BJ (cell line): ENCODE measurements at regions of chr20 and their contacts with region 1.

Region 1: DNA sequence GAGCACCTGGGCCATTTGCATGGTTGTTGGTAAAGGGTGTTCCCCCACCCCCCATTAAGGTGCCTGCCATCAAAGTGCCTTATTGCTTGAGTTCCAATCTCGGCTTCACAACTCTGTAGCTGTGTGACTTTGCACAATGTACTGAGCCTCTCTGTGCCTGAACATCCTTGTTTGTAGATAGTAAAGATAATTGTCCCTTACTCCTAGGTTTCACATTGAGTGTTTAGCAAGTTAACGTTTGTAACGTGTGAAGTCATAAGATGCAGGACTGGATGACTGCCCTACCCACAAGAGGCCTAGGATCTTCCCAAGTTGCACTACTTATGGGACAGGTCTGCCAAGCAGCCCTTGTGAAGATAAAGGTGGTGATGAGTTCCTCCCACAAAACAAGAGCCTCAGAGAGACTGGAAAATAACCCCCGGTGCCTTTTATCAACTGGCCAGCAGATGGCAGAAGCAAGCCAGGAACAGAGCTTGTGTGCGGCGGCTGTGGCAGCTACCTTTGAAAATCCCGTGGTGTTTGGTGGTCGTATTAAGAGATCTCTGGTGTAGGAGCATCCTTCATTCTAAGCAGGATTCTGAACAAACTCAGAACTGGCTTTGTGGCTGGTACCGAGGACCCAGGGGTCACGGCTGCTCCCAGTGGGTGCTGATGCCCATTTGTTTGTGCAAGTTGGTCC is 99.0 kb downstream of the CDH26 start:
- DNase-seq: no peak
- H3K4me3 ChIP-seq: no peak overlapping the region
- H3K27me3 ChIP-seq: no peaks in the 10 kb centered on the region
- CTCF ChIP-seq: peak; percentile 89

Region 2: DNA sequence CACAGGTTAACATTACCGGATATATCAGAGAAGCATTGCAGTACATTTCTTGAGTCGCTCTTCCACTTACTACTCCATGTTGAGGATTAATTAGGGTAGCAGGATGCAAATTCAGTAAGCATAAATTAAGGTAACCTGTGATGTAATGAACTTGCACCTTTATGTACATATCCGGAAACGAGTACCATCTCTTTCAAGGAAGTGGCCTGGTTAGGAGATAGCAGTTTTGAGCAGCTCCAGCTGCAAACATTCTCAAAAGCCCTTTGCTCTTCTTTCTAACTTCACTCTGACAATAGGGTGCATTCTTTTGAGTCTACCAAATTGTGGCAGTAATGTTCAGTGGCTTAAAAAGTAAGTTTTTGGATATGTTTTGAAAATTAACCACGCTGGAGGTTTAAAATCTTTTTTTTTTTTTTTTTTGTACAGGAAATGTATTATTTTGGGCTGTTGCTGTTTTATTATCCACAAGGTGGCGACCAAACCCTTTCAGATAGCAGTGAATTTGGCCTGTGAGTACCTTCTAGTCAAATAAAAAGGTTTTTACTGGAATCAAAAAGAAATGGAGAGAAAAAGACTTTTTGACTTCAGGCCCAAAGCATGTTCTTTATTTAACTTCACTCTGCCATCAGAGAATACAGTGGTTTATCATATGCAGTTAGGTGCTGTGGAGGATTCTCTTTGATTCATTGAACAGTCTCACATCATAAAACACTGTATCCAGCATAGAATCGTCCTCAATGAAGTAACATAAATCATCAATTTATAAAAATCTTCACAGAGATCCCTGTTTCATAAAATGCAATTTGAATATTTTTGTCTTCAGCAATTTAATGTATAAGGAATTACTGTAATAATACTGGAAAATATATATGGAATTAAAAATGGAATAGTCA is 108.2 kb before region 1 on chr20:
- CTCF ChIA-PET with region 1: interaction called, 12 read pairs
- POLR2A ChIA-PET with region 1: no interaction called
- DNase-seq: no peak
- H3K4me3 ChIP-seq: no peak overlapping the region
- H3K27me3 ChIP-seq: no peaks in the 10 kb centered on the region
- CTCF ChIP-seq: peak; percentile 67

Region 3: GRCh38 chr20:60113024-60113724 is 55.9 kb after region 1 on chr20:
- CTCF ChIA-PET with region 1: interaction called, 15 read pairs
- POLR2A ChIA-PET with region 1: interaction called, 3 read pairs
- DNase-seq: no peak
- H3K4me3 ChIP-seq: no peak overlapping the region
- H3K27me3 ChIP-seq: no peaks in the 10 kb centered on the region
- CTCF ChIP-seq: no peak

Region 4: GRCh38 chr20:60210779-60211617 is 153.7 kb after region 1 on chr20:
- CTCF ChIA-PET with region 1: interaction called, 65 read pairs
- POLR2A ChIA-PET with region 1: no interaction called
- DNase-seq: no peak
- H3K4me3 ChIP-seq: no peak overlapping the region
- H3K27me3 ChIP-seq: peaks cover 8% of the 10 kb centered on the region
- CTCF ChIP-seq: peak; percentile 94

Region 5: DNA sequence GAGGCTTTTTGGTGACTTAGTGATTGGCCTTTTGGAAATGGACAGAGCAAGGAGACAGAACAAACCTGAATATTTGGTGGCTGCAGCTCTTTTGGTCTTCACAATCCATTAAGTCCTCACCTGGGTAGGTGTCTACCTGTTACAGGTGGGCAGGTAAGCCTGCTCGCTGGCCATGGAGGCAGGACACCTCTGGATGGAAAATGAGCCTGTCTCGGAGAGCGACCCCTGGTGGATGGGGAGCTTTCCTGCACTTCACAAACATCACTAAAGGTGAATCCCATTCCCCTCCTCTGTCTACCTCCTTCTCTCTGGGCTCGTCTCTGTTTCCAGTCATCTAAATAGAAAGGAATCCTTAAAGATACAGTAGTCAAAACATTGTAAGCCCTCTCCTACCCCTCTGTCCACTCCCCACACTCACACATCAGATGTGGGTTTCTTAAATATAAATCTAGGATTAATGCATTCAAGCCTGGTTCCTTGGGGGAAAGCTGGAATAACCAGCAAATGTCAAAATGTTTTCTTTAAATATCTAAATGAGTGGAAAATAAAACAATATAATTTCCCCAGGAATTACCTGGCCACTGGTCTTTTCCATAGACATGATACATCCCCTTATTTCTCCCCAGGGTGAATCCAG is 205.8 kb after region 1 on chr20:
- CTCF ChIA-PET with region 1: interaction called, 24 read pairs
- POLR2A ChIA-PET with region 1: no interaction called
- DNase-seq: no peak
- H3K4me3 ChIP-seq: no peak overlapping the region
- H3K27me3 ChIP-seq: peaks cover 1% of the 10 kb centered on the region; the same call in 1 of the 2 replicates
- CTCF ChIP-seq: peak; percentile 80